B cell (primary cell): ENCODE measurements at regions of chr4 and their contacts with region 1.

Region 1: DNA sequence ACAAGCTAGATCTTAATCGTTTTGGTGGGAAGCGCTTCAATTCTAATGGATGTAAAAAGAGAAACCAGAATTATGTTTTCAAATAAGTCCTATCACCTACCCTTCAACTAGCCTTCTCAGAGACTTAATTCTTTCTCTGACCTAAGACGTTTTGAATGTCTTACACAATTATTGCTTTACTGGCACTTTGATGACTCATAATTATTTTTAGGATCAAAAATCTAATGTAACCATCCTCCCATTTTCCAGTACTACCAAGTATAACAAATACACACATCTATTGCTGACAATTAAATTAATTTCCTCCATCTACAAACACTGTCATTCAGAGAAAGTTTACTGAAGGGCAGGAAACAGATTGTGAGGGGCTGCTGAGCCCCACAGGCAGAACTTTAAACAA is 108.6 kb downstream of the PPP3CA start:
- DNase-seq: no peak
- ATAC-seq: no peak
- H3K4me3 ChIP-seq: no peak overlapping the region
- H3K4me3 Mint-ChIP-seq: no peak overlapping the region
- H3K27ac ChIP-seq: no peak overlapping the region
- H3K27ac Mint-ChIP-seq: no peak overlapping the region
- H3K4me1 ChIP-seq: peaks cover 15 to 41% of the 10 kb centered on the region in 2 donors
- H3K4me1 Mint-ChIP-seq: peaks cover 59% of the 10 kb centered on the region
- H3K27me3 ChIP-seq: no peaks in the 10 kb centered on the region
- H3K27me3 Mint-ChIP-seq: no peaks in the 10 kb centered on the region
- CTCF ChIP-seq: no peak

Region 2: GRCh38 chr4:101200561-101200960 is 38.1 kb before region 1 on chr4:
- CTCF ChIA-PET with region 1: no interaction called
- POLR2A ChIA-PET with region 1: no interaction called
- intact Hi-C with region 1: loop called (anchors 5 kb)
- DNase-seq: no peak
- ATAC-seq: peak; percentile 39
- H3K4me3 ChIP-seq: no peak overlapping the region
- H3K4me3 Mint-ChIP-seq: peak overlapping the region; percentile 46
- H3K27ac ChIP-seq: no peak overlapping the region
- H3K27ac Mint-ChIP-seq: peak overlapping the region; percentile 79
- H3K4me1 ChIP-seq: peaks cover 20 to 44% of the 10 kb centered on the region in 2 donors
- H3K4me1 Mint-ChIP-seq: peaks cover 61% of the 10 kb centered on the region
- H3K27me3 ChIP-seq: no peaks in the 10 kb centered on the region
- H3K27me3 Mint-ChIP-seq: no peaks in the 10 kb centered on the region
- CTCF ChIP-seq: no peak

Region 3: DNA sequence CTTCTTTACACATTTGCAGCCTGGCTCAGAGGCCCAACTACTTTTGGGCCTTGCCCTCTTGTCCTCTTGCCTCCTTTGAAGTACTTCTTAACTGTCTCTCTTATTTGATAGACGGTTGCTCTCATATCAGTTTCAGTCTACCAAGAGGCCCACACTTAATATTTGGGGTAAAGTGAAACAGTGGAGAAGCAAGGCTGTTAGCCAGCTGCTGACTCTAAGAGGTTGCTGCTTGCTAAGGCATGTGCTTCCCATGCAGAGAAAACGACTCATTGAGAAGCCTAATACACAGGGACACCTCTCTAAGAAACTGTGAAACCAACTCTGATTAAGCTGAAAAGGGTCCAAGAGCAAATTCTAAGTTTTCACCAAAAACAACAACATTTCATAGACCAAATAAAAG is 14.0 kb after region 1 on chr4:
- CTCF ChIA-PET with region 1: no interaction called
- POLR2A ChIA-PET with region 1: no interaction called
- intact Hi-C with region 1: no loop called
- DNase-seq: no peak
- ATAC-seq: no peak
- H3K4me3 ChIP-seq: no peak overlapping the region
- H3K4me3 Mint-ChIP-seq: no peak overlapping the region
- H3K27ac ChIP-seq: no peak overlapping the region
- H3K27ac Mint-ChIP-seq: no peak overlapping the region
- H3K4me1 ChIP-seq: peaks cover 0 to 21% of the 10 kb centered on the region in 2 donors
- H3K4me1 Mint-ChIP-seq: peaks cover 54% of the 10 kb centered on the region
- H3K27me3 ChIP-seq: no peaks in the 10 kb centered on the region
- H3K27me3 Mint-ChIP-seq: no peaks in the 10 kb centered on the region
- CTCF ChIP-seq: no peak

Region 4: DNA sequence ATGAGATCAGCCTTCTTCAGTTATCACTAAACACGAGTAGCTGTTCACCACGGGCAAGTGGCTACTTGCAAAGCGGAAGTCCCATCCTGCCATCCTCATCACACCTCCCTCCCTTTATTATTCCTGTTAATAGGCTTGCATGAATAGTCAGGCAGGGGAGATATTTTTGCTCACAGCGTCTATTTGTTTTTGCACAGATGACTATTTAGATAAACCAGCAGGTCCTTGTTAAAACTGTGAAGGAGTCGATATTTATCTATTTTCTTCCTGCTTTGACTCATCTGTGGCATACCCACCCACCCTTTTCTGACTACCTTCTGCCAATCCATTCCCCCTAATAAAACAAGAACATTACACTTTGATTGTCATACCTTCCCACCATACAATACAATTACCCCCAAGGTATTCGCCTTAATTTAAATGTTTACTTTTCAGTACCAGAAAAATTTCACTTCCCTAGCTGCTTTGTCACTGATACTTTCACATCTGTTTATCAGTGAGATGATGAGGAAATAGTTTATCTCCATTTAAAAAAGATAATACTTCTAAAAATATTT is 455.2 kb after region 1 on chr4:
- CTCF ChIA-PET with region 1: no interaction called
- POLR2A ChIA-PET with region 1: no interaction called
- intact Hi-C with region 1: no loop called
- DNase-seq: peak; percentile 61
- ATAC-seq: peak; percentile 71
- H3K4me3 ChIP-seq: peak overlapping the region in 3 of 5 experiments; percentile 13 to 41 (median 16)
- H3K4me3 Mint-ChIP-seq: peak overlapping the region; percentile 79
- H3K27ac ChIP-seq: peak overlapping the region; percentile 59 to 65
- H3K27ac Mint-ChIP-seq: peak overlapping the region; percentile 87
- H3K4me1 ChIP-seq: peaks cover 39 to 41% of the 10 kb centered on the region in 2 donors
- H3K4me1 Mint-ChIP-seq: peaks cover 67% of the 10 kb centered on the region
- H3K27me3 ChIP-seq: no peaks in the 10 kb centered on the region
- H3K27me3 Mint-ChIP-seq: no peaks in the 10 kb centered on the region
- CTCF ChIP-seq: no peak